Heart right ventricle (tissue), 16 donors: ENCODE measurements at regions of chr18 and their contacts with region 1.

Region 1: DNA sequence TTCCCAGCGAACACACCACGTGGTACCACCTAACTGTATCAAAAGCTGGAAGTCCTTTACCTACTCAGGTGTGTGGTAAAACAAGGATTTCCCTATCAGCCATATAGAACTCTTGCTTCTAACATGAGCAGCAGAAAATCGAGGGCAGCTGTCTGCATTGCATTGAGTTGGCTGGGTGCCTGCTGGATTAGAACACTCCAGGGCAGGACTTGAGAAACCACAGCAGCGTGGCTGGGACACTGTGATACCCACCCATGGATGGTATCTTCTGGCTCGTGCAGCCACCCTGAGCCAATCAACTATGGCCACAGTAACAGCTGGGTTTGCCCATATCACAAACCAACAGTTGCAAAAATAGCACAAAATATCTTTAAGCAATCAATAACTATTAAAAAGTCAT is 188.3 kb downstream of the FBXO15 start:
- DNase-seq: no peak
- ATAC-seq: no peak
- H3K4me3 ChIP-seq: no peak overlapping the region
- H3K27ac ChIP-seq: no peak overlapping the region
- H3K4me1 ChIP-seq: no peaks in the 10 kb centered on the region
- H3K27me3 ChIP-seq: peaks cover 0 to 17% (median 1%) of the 10 kb centered on the region in 7 donors
- CTCF ChIP-seq: no peak

Region 2: GRCh38 chr18:74013955-74014354 is 54.6 kb after region 1 on chr18:
- intact Hi-C with region 1: loop called in 1 of 10 experiments (anchors 10 kb)
- DNase-seq: no peak
- ATAC-seq: peak in 1 of 8 donors; percentile 70
- H3K4me3 ChIP-seq: no peak overlapping the region
- H3K27ac ChIP-seq: no peak overlapping the region
- H3K4me1 ChIP-seq: peaks cover 0 to 14% (median 0%) of the 10 kb centered on the region in 9 donors
- H3K27me3 ChIP-seq: no peaks in the 10 kb centered on the region
- CTCF ChIP-seq: no peak